Dorsolateral prefrontal cortex (tissue), 120 donors: ENCODE measurements at regions of chr18 and their contacts with region 1.

Region 1: DNA sequence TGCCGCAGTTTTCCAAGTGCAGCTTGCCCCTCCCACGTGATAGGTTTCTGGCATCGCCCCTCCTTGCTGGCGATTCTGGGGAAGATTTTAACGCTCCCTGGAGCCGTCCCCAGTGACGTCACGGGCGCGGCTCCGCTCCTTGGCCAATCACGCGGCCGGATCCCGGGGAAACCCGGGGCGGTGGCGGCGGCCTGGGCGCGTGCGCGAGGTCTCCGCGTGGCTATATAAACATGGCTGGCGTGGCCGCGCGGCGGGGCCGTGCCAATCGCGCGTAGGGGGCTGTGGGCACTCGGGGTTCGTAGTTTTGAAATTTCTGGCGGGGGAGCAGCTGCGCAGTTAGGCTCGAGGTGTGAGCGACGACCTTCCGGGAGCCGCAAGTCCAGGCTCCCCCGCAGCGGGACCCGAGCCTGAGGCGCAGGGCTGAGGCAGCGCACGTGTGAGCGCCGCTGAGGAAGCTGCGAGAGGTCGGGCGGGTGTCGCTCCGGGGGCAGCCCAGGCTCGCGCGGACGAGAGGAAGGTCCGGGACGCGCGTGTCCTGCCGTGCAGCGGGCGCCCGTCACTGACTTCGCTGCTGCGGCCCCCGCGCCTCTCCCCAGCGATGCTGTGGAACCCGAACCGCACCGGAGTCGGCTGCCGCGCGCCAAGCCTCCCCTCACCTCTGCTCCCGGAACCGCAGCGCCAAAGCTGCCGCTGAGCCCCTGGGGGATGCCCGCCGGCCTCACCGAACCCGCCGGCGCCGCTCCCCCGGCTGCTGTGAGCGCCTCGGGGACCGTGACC is at the start of gene TAF4B:
- DNase-seq: peak; percentile 88 to 96 (median 93)
- H3K4me3 ChIP-seq: peak within 1 kb of the TSS; percentile 65 to 98 (median 90)
- H3K27ac ChIP-seq: peak within 1 kb of the TSS in 54 of 59 donors; percentile 1 to 90 (median 70)
- H3K27me3 ChIP-seq: no peaks in the 10 kb centered on the region
- CTCF ChIP-seq: peak in 16 of 56 donors; percentile 5 to 41 (median 24)
- total RNA-seq, gene TAF4B: 4.7 to 15.4 (median 10.2) TPM

Region 2: DNA sequence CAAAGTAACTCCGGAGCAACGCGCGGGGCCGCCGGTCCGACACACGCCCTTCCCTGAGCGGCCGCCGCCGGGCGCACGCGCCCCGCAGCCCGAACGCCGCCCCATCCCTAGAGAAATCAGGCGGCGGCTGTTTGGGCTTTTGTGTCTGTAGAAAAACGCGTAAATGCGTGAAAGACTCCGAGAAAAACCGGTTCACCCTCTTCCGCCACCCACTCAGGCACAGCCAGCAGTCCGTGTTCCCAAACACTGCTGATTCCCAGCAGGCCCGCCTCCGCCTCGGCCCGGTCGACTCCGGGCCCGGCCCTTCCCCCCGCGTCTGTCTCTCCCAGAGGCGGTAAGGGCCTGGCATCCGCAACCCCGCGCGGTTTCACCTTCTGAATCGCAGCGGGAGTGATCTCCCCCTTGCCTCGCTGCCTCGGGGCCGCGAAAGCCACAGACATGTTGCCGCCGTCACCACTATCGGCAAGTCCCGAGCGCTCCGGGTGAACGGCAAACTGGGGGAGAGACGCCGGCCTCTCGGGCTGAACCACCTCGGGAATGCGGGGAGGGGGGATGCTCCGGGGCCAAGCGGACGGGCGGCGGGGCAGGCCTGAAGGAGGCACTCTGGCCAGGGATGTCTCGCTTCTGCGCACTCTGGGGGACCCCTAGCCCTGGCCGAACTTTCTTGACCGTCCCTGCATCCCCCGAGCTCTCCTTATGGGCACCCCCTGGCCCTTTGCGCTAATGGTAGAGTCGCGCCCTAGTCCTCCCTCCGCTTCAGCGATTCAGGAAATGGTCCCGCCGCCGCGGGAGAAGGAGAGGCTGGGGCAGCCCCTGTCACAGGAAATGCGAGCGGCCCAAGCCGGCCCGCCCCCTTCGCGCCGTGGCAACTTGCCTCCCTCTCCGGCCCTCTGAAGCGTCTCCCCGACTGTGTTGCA is 136.0 kb before region 1 on chr18 and contains the start of gene SS18:
- intact Hi-C with region 1: loop called (anchors 2 to 5 kb)
- DNase-seq: peak; percentile 81 to 94 (median 88)
- H3K4me3 ChIP-seq: peak within 1 kb of the TSS; percentile 65 to 97 (median 87)
- H3K27ac ChIP-seq: peak within 1 kb of the TSS; percentile 91 to 99 (median 97)
- H3K27me3 ChIP-seq: no peaks in the 10 kb centered on the region
- CTCF ChIP-seq: peak in 17 of 56 donors; percentile 3 to 32 (median 10)
- total RNA-seq, gene SS18: 37.9 to 81.3 (median 53.9) TPM

Region 3: DNA sequence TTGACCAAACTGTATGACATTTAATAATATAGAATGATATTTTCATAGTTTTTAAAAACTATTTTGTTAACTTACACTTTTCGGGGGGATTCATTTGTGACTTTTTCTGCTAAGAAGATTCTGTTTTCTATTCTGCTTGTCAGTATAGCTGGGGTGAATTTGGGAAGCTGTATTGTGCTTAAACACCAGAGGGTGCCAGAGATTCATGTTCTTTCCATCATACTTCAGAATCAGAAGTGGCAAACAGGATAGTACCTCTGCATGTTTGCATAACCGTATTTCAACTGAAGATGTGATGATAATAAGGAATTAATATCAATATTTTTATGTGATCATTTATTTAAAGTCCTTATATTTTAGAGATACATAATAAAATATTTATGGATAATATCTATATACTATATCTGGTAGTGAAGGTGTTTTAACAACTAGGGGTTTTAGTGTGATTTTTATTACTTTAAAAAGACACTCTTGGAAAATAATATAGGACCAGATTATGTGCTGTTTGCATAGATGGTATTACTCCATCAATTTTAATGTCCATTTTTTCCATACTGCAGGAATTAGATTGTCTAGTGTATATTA is 80.9 kb after region 1 on chr18:
- intact Hi-C with region 1: loop called in 1 of 2 experiments (anchors 10 kb)
- DNase-seq: peak in 1 of 10 donors; percentile 45
- H3K4me3 ChIP-seq: no peak overlapping the region
- H3K27ac ChIP-seq: no peak overlapping the region
- H3K27me3 ChIP-seq: no peaks in the 10 kb centered on the region
- CTCF ChIP-seq: peak; percentile 45 to 85 (median 72)